ENCODE measurements at regions of chr7 and their contacts with region 1.

Region 1: GRCh38 chr7:33221387-33221786 is 92.0 kb downstream of the BBS9 start:
- DNase-seq: no peak
- ATAC-seq: no peak
- H3K4me3 ChIP-seq: no peak overlapping the region
- H3K27ac ChIP-seq: no peak overlapping the region
- H3K4me1 ChIP-seq: no peaks in the 10 kb centered on the region
- H3K27me3 ChIP-seq: no peaks in the 10 kb centered on the region
- CTCF ChIP-seq: no peak
- POLR2A ChIP-seq: no peak
- RAD21 ChIP-seq: no peak

Region 2: DNA sequence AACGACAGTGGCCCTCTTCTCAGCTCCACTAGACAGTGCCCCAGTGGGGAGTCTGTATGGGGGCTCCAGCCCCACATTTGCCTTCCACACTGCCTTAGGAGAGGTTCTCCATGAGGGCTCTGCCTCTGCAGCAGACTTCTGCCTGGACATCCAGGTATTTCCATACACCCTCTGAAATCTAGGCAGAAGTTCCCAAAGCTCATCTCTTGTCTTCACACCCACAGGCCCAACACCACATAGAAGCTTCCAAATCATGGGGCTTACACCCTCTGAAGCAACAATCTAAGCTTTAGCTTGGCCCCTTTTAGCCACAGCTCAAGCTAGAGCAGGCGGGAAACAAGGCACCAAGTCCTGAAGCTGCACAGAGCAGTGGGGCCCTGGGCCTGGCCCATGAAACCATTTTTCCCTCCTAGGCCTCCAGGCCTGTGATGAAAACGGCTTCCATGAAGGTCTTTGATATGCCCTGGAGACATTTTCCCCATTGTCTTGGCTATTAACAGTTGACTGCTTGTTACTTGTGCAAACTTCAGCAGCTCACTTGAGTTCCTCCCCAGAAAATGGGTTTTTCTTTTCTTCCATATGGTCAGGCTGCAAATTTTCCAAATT is 419.0 kb before region 1 on chr7:
- CTCF ChIA-PET with region 1: no interaction called
- POLR2A ChIA-PET with region 1: no interaction called
- dilution Hi-C with region 1: no loop called
- in situ Hi-C with region 1: no loop called
- intact Hi-C with region 1: no loop called
- DNase-seq: no peak
- ATAC-seq: no peak
- H3K4me3 ChIP-seq: no peak overlapping the region
- H3K27ac ChIP-seq: no peak overlapping the region
- H3K4me1 ChIP-seq: no peaks in the 10 kb centered on the region
- H3K27me3 ChIP-seq: no peaks in the 10 kb centered on the region
- CTCF ChIP-seq: no peak
- POLR2A ChIP-seq: no peak
- RAD21 ChIP-seq: no peak

Region 3: DNA sequence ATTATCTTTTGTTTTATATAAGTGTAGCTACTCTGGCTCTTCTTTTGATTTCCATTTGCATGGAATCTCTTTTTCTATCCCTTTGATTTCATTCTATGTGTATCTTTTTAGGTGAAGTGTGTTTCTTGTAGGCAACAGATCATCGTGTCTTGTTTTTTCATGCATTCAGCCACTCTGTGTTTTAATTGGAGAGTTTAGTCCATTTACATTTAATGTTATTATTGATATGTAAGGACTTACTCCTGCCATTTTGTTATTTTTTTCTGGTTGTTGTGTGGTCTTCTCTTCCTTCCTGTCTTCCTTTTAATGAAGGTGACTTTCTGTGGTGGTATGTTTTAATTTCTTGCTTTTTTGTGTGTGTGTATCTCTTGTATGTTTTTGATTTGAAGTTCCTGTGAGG is 10.4 kb before region 1 on chr7:
- CTCF ChIA-PET with region 1: no interaction called
- POLR2A ChIA-PET with region 1: no interaction called
- dilution Hi-C with region 1: no loop called
- in situ Hi-C with region 1: no loop called
- intact Hi-C with region 1: no loop called
- DNase-seq: no peak
- ATAC-seq: no peak
- H3K4me3 ChIP-seq: no peak overlapping the region
- H3K27ac ChIP-seq: no peak overlapping the region
- H3K4me1 ChIP-seq: no peaks in the 10 kb centered on the region; the same call in 1 of the 2 replicates
- H3K27me3 ChIP-seq: no peaks in the 10 kb centered on the region
- CTCF ChIP-seq: no peak
- POLR2A ChIP-seq: no peak
- RAD21 ChIP-seq: no peak

Region 4: GRCh38 chr7:33411020-33411419 is 189.6 kb after region 1 on chr7:
- CTCF ChIA-PET with region 1: no interaction called
- POLR2A ChIA-PET with region 1: no interaction called
- dilution Hi-C with region 1: no loop called
- in situ Hi-C with region 1: no loop called
- intact Hi-C with region 1: no loop called
- DNase-seq: no peak
- ATAC-seq: no peak
- H3K4me3 ChIP-seq: no peak overlapping the region
- H3K27ac ChIP-seq: no peak overlapping the region
- H3K4me1 ChIP-seq: no peaks in the 10 kb centered on the region
- H3K27me3 ChIP-seq: no peaks in the 10 kb centered on the region
- CTCF ChIP-seq: no peak
- POLR2A ChIP-seq: no peak
- RAD21 ChIP-seq: no peak

Region 5: DNA sequence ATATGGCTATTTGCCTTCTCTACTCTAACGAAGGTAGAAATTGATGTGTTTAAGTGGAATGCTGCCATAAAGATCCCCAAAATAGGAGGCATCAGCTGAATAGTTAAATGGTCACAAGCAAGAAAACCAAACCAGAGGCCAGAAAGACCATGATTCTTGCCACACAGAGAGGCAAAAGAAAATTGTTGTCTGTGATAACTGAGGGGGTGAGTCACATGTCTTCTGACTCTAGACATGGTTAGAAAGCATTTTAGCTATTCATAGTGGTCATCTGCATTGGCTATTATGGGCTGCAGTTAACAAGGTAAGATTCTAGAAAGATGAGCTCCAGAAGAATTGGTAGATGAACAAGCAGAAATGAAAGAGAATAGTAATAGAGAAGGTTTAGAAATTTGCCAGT is 1075.3 kb after region 1 on chr7:
- CTCF ChIA-PET with region 1: no interaction called
- POLR2A ChIA-PET with region 1: interaction called, 10 read pairs
- dilution Hi-C with region 1: no loop called
- in situ Hi-C with region 1: no loop called
- intact Hi-C with region 1: no loop called
- DNase-seq: peak; percentile 44
- ATAC-seq: peak; percentile 49
- H3K4me3 ChIP-seq: no peak overlapping the region
- H3K27ac ChIP-seq: no peak overlapping the region
- H3K4me1 ChIP-seq: peaks cover 2% of the 10 kb centered on the region; the same call in 1 of the 2 replicates
- H3K27me3 ChIP-seq: no peaks in the 10 kb centered on the region; the same call in 1 of the 2 replicates
- CTCF ChIP-seq: no peak
- POLR2A ChIP-seq: no peak
- RAD21 ChIP-seq: no peak

Measured in IMR-90 (cell line).